Heart left ventricle (tissue), 16 donors: ENCODE measurements at regions of chr9 and their contacts with region 1.

Region 1: DNA sequence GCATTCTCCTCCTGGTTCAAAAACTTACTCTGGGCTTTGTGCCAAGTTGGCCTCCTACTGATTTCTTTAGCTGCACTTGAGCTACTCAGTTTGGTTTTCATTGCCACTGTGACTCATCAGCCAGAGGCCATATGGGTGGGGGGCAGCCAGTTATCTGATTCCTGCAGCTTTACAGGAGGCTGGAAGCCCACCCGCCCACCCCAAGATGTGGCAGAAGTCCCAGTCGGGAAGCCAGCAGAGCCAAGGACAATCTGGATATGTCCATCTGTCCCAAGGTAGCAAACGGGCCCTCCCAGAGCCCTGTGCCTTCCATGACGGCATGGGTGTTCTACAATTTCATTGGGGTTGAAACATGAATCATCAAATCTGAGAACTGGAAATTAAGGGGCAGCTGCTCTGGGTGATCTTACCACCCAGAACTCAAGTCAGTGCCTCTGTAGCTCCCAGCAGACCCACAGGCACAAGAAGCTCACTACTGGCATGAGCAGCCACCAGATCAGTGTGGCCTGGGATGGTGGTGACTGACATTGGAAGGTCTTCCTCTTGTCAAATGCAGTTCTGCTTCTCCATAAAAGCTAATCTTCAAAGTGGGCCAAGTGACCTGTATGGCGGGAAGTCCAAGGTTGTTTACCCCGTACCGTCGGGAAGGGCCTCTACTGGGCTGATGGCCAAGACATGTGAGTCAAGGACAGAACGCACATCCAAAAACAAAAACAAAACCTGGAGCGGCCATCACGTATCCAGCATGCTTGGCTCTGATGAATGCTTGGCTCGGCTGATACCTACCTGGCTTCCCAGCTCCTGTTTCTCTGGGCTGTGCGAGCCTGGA is 15.6 kb downstream of the FCN2 start:
- DNase-seq: peak in 4 of 5 donors; percentile 62 to 83 (median 78)
- ATAC-seq: peak; percentile 71 to 90 (median 80)
- H3K4me3 ChIP-seq: no peak overlapping the region
- H3K27ac ChIP-seq: peak overlapping the region; percentile 53 to 88 (median 76)
- H3K4me1 ChIP-seq: peaks cover 2 to 50% (median 31%) of the 10 kb centered on the region in 12 donors
- H3K27me3 ChIP-seq: no peaks in the 10 kb centered on the region
- CTCF ChIP-seq: no peak
- POLR2A ChIP-seq: no peak

Region 2: DNA sequence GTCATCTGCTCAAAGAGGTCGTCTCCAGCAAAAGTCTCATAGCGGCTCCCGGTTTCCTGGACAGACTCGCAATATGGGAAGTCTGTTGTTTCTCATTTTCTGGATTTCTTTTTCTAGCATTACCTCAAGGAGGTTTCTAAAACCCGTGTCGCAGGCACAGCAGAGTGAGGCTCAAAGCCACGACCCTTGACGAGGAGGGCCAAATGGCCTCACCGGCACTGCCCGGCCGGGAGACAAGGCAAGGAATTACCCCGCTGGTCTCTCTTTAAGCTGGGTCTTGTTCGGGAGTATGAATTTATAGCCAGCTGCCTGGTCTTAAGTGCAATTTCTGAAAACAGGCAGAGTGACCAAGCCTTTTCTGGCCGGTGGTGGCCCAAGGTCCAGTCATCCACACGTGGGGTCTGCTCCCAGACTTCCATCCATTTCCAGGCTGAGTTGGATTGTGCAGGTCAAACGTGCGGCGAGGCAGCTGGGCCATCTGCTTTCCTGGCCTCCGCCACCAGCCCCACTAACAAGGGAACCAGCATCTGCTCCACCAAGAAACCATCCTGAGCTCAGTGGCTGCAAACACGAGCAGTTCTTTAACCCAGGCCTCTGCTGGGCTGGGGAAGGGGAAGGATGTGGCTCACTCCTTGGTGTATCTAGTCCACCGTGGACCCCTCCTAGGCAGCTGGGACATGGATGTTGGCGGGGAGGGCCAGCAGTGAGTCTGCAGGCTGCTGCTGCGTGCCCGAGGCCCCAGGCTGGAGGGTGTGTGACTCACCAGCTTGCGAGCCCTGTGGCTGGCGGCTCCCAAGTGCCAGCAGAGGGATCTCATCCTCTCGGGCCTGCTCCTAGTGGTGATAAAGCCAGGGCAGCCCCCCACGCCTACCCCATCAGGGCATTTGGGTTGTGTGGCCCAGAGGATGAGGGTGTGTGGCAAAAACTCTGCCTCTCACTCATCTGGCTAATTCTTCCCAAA is 310.2 kb before region 1 on chr9:
- intact Hi-C with region 1: no loop called
- DNase-seq: peak in 1 of 5 donors; percentile 56
- ATAC-seq: no peak
- H3K4me3 ChIP-seq: no peak overlapping the region
- H3K27ac ChIP-seq: no peak overlapping the region
- H3K4me1 ChIP-seq: peaks cover 0 to 5% (median 0%) of the 10 kb centered on the region in 12 donors
- H3K27me3 ChIP-seq: peaks cover 0 to 7% (median 0%) of the 10 kb centered on the region in 9 donors
- CTCF ChIP-seq: no peak
- POLR2A ChIP-seq: no peak

Region 3: GRCh38 chr9:134785325-134786108 is 110.7 kb before region 1 on chr9:
- intact Hi-C with region 1: loop called in 2 of 10 experiments (anchors 1 to 10 kb)
- DNase-seq: peak in 4 of 5 donors; percentile 41 to 65 (median 56)
- ATAC-seq: peak; percentile 54 to 74 (median 64)
- H3K4me3 ChIP-seq: no peak overlapping the region
- H3K27ac ChIP-seq: peak overlapping the region in 5 of 12 donors; percentile 9 to 31 (median 17)
- H3K4me1 ChIP-seq: peaks cover 0 to 41% (median 24%) of the 10 kb centered on the region in 12 donors
- H3K27me3 ChIP-seq: no peaks in the 10 kb centered on the region
- CTCF ChIP-seq: no peak
- POLR2A ChIP-seq: no peak